GM10248 (cell line): ENCODE measurements at regions of chr5 and their contacts with region 1.

Region 1: GRCh38 chr5:138035605-138036537 is 3.0 kb upstream of the FAM13B start:
- DNase-seq: peak; percentile 56
- CTCF ChIP-seq: peak; percentile 93

Region 2: DNA sequence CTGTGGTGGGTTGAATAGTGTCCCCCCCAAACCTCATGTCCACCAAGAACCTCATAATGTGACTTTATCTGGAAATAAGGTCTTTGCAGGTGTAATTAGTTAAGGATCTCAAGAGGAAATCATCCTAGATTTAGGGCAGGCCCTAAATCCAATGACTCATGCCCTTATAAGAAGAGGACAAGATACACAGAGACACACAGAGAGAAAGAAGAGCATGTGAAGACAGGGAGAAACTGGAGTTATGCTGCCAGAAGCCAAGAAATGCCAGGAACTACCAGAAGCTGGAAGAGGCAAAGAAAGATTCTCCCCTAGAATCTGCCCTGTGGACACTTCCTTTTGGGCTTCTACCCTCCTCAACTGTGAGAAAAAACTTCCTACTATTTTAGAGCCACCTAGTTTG is 11.8 kb before region 1 on chr5:
- CTCF ChIA-PET with region 1: interaction called, 26 read pairs
- POLR2A ChIA-PET with region 1: no interaction called
- DNase-seq: no peak
- CTCF ChIP-seq: no peak

Region 3: DNA sequence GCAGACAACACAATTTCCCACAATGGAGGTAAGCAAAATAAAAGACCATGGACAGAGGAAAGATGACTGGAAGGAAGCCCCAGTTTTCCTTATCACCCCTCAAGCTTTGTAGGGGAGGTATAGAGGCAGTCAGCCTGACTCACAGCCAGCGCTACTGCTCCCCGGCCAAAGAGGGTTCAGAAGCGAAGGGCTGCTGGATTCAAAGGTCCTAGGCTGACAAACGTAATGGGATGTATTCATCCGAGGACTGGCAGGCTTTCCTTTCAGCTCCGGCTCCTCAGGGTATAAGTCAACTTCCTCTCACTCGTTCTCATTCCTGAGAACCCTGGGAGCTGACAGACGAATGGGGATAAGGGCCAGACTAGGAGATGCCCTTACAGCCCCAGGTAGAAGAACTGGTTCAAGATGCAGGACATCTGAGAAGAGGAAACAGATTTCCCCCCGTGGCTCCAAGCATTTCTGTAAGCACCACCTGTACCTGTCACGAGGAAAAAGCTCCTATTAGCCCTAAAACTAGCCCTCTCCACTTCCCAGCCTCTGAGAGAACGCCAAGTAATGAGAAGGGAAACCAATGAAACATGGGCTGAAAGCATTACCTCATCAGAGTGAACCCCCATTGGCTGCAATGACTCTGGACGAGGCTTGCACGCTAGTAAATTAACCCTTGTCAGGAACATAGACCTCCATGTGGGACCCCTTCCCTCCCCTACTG is 19.1 kb after region 1 on chr5:
- CTCF ChIA-PET with region 1: interaction called, 68 read pairs
- POLR2A ChIA-PET with region 1: interaction called, 8 read pairs
- DNase-seq: no peak
- CTCF ChIP-seq: no peak

Region 4: GRCh38 chr5:138065102-138065501 is 29.2 kb after region 1 on chr5:
- CTCF ChIA-PET with region 1: interaction called, 165 read pairs
- POLR2A ChIA-PET with region 1: no interaction called
- DNase-seq: no peak
- CTCF ChIP-seq: no peak

Region 5: GRCh38 chr5:138083702-138084101 is 47.8 kb after region 1 on chr5 and contains the start of gene WNT8A:
- CTCF ChIA-PET with region 1: interaction called, 43 read pairs
- POLR2A ChIA-PET with region 1: no interaction called
- DNase-seq: no peak
- CTCF ChIP-seq: no peak

Region 6: DNA sequence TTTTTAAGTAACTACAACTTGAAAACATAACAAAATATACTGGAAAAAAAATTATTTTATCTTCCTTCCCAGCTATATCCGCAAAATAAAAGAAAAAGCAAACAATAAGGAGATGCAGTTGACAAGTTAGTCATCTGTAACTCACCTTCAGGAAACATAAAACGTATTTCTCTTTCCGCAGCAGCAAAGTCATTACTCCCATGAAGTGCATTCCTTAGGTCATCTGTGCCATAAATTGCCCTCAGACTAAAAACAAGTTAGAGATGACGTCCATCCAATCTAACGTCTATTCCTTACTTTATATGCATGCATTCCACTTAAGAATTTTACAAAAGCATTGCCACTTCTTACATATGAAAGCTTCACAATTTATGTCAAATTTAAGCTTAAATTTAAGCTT is 92.5 kb after region 1 on chr5:
- CTCF ChIA-PET with region 1: interaction called, 23 read pairs
- POLR2A ChIA-PET with region 1: no interaction called
- DNase-seq: no peak
- CTCF ChIP-seq: no peak